Ovary (tissue), 10 donors: ENCODE measurements at regions of chr15 and their contacts with region 1.

Region 1: DNA sequence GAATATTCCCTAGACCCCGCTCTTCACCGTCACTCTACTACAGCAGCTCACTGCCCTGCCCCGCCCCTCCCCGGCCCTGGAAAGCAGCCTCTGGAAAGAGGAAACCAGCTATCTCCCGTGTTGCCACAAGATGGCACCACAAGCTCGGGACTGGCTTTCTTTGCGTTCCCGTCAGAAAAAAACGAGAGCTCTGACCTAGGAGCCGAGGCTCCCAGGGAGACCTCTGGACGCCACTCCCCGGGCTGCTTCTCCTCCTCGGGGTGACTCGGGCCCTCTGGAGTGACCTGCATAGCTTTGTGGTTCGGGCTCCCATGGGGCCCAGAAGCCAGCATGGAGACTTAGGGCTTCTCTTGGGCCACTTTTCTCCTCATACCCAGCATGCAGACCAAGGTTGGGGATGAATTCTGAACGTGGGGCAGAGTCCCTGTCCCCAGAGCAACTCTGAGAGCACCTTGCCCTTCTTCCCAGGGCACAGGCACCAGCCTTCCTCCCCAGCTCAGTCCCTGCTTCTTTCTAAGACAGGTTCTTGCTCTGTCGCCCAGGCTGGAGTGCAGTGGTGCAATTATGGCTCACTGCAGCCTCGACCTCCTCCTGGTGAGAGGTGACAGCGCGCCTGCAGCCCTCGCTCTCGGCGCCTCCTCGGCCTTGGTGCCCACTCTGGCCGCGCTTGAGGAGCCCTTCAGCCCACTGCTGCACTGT is 19.0 kb downstream of the STOML1 start:
- DNase-seq: peak; percentile 78 to 90 (median 86)
- H3K4me3 ChIP-seq: no peak overlapping the region
- H3K27ac ChIP-seq: no peak overlapping the region
- H3K4me1 ChIP-seq: no peaks in the 10 kb centered on the region
- H3K27me3 ChIP-seq: no peaks in the 10 kb centered on the region
- CTCF ChIP-seq: peak; percentile 57 to 88 (median 83)
- EP300 ChIP-seq: no peak
- POLR2A ChIP-seq: no peak

Region 2: GRCh38 chr15:74036271-74037170 is 63.4 kb after region 1 on chr15:
- intact Hi-C with region 1: loop called (anchors 5 to 10 kb)
- DNase-seq: peak in 4 of 5 donors; percentile 47 to 73 (median 58)
- H3K4me3 ChIP-seq: no peak overlapping the region
- H3K27ac ChIP-seq: no peak overlapping the region
- H3K4me1 ChIP-seq: no peaks in the 10 kb centered on the region
- H3K27me3 ChIP-seq: no peaks in the 10 kb centered on the region
- CTCF ChIP-seq: no peak
- EP300 ChIP-seq: no peak
- POLR2A ChIP-seq: no peak

Region 3: DNA sequence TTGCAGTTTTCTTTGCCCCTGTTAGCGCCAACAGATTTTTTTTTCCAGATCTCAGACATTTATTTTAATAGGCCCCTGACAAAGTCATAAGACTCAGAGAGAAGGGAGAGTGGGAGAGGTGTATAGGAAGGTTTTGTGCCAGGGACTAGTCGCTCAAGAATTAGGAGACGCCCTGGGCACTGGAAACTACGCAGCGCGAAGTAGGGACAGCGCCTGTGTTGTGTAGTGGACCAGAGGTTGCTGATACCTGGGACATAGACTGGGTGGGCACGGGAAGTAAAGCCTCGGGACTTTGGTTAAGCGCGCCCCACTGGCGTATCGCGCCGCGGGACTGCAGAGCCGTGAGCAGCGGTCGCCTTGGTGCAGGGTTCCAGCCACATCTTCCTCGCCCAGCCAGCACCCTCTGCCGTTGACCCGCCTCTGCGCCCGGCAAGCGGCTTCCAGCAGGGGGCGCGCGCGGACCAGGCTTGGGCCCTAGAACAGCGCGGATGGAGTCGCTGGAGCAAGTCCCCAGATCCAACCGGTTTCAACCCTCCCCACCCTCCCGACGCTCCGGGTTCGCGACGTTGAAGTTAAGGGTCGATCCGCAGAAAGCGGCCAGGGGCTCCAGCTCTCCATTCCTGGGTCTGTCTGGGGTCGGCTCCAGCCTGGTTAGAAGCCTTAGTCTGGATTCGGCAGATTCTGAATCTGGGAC is 154.3 kb after region 1 on chr15:
- intact Hi-C with region 1: loop called in 2 of 4 experiments (anchors 5 to 10 kb)
- DNase-seq: peak; percentile 84 to 94 (median 92)
- H3K4me3 ChIP-seq: peak overlapping the region; percentile 26
- H3K27ac ChIP-seq: no peak overlapping the region
- H3K4me1 ChIP-seq: peaks cover 8% of the 10 kb centered on the region
- H3K27me3 ChIP-seq: no peaks in the 10 kb centered on the region
- CTCF ChIP-seq: peak; percentile 93 to 99 (median 99)
- EP300 ChIP-seq: no peak
- POLR2A ChIP-seq: no peak